IMR-90 (cell line): ENCODE measurements at regions of chr9 and their contacts with region 1.

Region 1: DNA sequence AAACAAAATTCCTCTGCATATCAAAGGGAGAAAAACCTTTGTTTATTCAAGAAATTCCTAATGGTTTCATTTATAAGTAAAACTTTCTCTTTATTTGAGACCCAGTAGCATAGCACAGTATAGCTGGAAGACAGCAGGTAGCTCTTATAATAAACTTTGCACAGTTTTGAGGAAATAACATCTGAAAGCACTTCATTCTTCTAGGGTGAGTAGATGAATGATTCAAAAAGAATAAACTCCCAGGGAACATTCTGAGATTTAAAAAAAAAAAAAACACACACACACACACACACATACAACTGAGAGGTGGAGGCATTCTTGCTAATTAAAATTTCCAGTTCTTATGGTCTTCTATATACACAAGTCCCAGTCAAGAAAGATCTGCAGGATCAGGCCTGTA is 197.3 kb downstream of the BNC2 start:
- DNase-seq: peak; percentile 54
- ATAC-seq: peak; percentile 63
- H3K4me3 ChIP-seq: no peak overlapping the region
- H3K27ac ChIP-seq: no peak overlapping the region
- H3K4me1 ChIP-seq: peaks cover 8% of the 10 kb centered on the region
- H3K27me3 ChIP-seq: no peaks in the 10 kb centered on the region
- CTCF ChIP-seq: no peak
- POLR2A ChIP-seq: no peak
- RAD21 ChIP-seq: no peak

Region 2: GRCh38 chr9:15622318-15622971 is 1050.7 kb before region 1 on chr9:
- CTCF ChIA-PET with region 1: no interaction called
- POLR2A ChIA-PET with region 1: interaction called, 11 read pairs
- dilution Hi-C with region 1: no loop called
- in situ Hi-C with region 1: no loop called
- intact Hi-C with region 1: no loop called
- DNase-seq: peak; percentile 46
- ATAC-seq: peak; percentile 57
- H3K4me3 ChIP-seq: no peak overlapping the region
- H3K27ac ChIP-seq: no peak overlapping the region
- H3K4me1 ChIP-seq: no peaks in the 10 kb centered on the region
- H3K27me3 ChIP-seq: no peaks in the 10 kb centered on the region
- CTCF ChIP-seq: peak; percentile 58
- POLR2A ChIP-seq: no peak
- RAD21 ChIP-seq: peak; percentile 32; the same call in 1 of the 2 replicates

Region 3: GRCh38 chr9:15693701-15694100 is 979.5 kb before region 1 on chr9:
- CTCF ChIA-PET with region 1: no interaction called
- POLR2A ChIA-PET with region 1: no interaction called
- dilution Hi-C with region 1: no loop called
- in situ Hi-C with region 1: no loop called
- intact Hi-C with region 1: no loop called
- DNase-seq: no peak
- ATAC-seq: no peak
- H3K4me3 ChIP-seq: no peak overlapping the region
- H3K27ac ChIP-seq: no peak overlapping the region
- H3K4me1 ChIP-seq: peaks cover 6% of the 10 kb centered on the region
- H3K27me3 ChIP-seq: no peaks in the 10 kb centered on the region
- CTCF ChIP-seq: no peak
- POLR2A ChIP-seq: no peak
- RAD21 ChIP-seq: no peak

Region 4: DNA sequence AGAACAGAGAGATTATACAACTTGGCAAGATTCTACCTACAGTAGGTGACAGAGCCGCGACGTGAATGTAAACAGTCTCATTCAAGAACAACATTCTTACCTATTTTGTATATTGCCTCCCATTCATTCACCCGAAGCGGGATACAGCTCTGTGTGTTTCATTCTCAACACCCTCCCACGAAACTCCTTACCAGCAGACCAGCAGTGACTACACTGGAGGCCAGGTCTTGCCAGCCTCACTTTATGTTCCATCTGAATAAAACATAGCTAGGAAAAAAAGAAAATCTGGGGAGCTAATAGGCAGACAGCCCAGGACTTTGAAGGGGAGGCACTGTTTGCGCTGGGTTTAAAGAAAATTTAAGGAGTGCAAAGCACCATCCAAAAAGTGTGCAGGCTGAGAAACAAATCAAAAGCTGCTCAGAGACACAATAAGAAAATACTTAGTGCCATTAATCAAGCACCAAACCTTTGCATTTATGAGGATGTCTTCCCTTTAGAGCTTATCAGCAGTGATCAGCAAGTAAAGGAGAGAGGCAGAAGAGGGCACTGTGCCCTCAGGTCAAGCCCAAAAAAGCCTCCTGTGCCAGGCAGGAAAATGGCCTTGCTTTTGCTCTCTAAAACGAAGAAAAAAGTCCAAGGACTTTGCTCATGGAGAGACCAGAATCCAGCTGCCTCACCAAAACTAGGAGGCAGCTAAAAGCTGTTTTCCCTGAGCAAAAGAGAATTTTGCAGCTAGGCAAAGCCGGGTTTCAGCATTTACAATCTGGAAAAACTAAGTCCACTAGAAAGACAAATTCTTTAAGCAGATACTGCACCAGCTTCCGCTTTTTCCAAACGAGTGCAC is 97.8 kb before region 1 on chr9:
- CTCF ChIA-PET with region 1: no interaction called
- POLR2A ChIA-PET with region 1: no interaction called
- dilution Hi-C with region 1: no loop called
- in situ Hi-C with region 1: no loop called
- intact Hi-C with region 1: no loop called
- DNase-seq: no peak
- ATAC-seq: no peak
- H3K4me3 ChIP-seq: no peak overlapping the region
- H3K27ac ChIP-seq: no peak overlapping the region
- H3K4me1 ChIP-seq: peaks cover 10% of the 10 kb centered on the region
- H3K27me3 ChIP-seq: no peaks in the 10 kb centered on the region
- CTCF ChIP-seq: no peak
- POLR2A ChIP-seq: no peak
- RAD21 ChIP-seq: peak; percentile 19; the same call in 1 of the 2 replicates